PC-9 (cell line): ENCODE measurements at regions of chr6 and their contacts with region 1.

Region 1: GRCh38 chr6:6881438-6882233 is 226.1 kb upstream of the RREB1 start:
- DNase-seq: peak; percentile 43 to 88
- H3K4me3 ChIP-seq: no peak overlapping the region
- H3K27ac ChIP-seq: peak overlapping the region; percentile 55
- H3K4me1 ChIP-seq: peaks cover 37% of the 10 kb centered on the region
- H3K27me3 ChIP-seq: no peaks in the 10 kb centered on the region
- CTCF ChIP-seq: no peak

Region 2: GRCh38 chr6:6826095-6826901 is 55.3 kb before region 1 on chr6:
- CTCF ChIA-PET with region 1: no interaction called
- POLR2A ChIA-PET with region 1: no interaction called
- intact Hi-C with region 1: loop called (anchors 1 kb)
- DNase-seq: peak; percentile 57 to 59
- H3K4me3 ChIP-seq: no peak overlapping the region; the same call in 1 of the 2 replicates
- H3K27ac ChIP-seq: peak overlapping the region; percentile 77
- H3K4me1 ChIP-seq: peaks cover 57% of the 10 kb centered on the region
- H3K27me3 ChIP-seq: no peaks in the 10 kb centered on the region
- CTCF ChIP-seq: no peak